Transverse colon (tissue), 4 donors: ENCODE measurements at regions of chr13 and their contacts with region 1.

Region 1: DNA sequence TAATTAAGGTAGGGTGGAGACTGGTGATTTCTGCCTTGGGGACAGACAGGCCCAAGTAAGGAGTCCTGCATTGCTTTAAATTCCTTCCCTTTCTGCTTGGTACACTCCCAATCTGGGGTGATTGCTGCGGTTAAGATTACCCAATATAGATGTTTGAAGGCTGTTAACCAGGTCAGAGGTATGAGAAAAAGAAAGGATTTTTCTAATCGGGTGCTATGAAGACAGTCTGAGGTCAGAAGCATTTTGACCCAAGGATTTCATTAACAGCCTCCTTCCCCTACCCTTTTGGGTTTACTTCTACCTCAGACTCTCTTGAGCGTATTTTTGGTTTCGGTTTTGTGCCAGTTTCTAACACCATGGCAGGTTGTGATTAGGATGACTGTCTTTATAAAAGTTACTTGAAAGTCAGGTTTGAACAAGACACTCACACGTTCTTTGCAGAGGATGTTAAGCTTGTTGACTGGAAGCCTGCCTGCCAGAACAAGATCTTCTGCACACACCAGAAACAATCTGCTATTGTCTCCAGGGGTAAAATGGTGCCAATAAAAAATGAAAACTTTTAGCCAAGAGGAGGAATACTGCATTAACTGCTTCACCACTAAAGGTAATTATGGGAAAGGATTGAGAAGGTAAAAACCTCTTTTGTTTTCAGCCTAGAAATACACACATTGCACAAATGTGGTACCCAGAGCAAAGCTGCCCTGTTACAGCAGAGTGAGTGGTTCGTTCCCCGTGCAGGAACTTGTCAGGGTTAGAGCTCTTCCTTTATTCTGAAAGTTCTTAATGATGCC is 108.8 kb downstream of the NDFIP2 start:
- DNase-seq: no peak
- H3K4me3 ChIP-seq: peak overlapping the region in 1 of 4 donors; percentile 9
- H3K27ac ChIP-seq: no peak overlapping the region
- H3K4me1 ChIP-seq: peaks cover 0 to 5% (median 0%) of the 10 kb centered on the region in 4 donors
- H3K27me3 ChIP-seq: no peaks in the 10 kb centered on the region
- CTCF ChIP-seq: no peak
- EP300 ChIP-seq: no peak
- POLR2A ChIP-seq: no peak

Region 2: GRCh38 chr13:78777976-78778375 is 811.8 kb before region 1 on chr13:
- in situ Hi-C with region 1: no loop called
- intact Hi-C with region 1: no loop called
- DNase-seq: no peak
- H3K4me3 ChIP-seq: no peak overlapping the region
- H3K27ac ChIP-seq: no peak overlapping the region
- H3K4me1 ChIP-seq: no peaks in the 10 kb centered on the region
- H3K27me3 ChIP-seq: no peaks in the 10 kb centered on the region
- CTCF ChIP-seq: no peak
- EP300 ChIP-seq: no peak
- POLR2A ChIP-seq: no peak

Region 3: GRCh38 chr13:79533781-79534400 is 55.9 kb before region 1 on chr13:
- in situ Hi-C with region 1: no loop called
- intact Hi-C with region 1: no loop called
- DNase-seq: no peak
- H3K4me3 ChIP-seq: no peak overlapping the region
- H3K27ac ChIP-seq: no peak overlapping the region
- H3K4me1 ChIP-seq: no peaks in the 10 kb centered on the region
- H3K27me3 ChIP-seq: no peaks in the 10 kb centered on the region
- CTCF ChIP-seq: no peak
- EP300 ChIP-seq: no peak
- POLR2A ChIP-seq: no peak

Region 4: DNA sequence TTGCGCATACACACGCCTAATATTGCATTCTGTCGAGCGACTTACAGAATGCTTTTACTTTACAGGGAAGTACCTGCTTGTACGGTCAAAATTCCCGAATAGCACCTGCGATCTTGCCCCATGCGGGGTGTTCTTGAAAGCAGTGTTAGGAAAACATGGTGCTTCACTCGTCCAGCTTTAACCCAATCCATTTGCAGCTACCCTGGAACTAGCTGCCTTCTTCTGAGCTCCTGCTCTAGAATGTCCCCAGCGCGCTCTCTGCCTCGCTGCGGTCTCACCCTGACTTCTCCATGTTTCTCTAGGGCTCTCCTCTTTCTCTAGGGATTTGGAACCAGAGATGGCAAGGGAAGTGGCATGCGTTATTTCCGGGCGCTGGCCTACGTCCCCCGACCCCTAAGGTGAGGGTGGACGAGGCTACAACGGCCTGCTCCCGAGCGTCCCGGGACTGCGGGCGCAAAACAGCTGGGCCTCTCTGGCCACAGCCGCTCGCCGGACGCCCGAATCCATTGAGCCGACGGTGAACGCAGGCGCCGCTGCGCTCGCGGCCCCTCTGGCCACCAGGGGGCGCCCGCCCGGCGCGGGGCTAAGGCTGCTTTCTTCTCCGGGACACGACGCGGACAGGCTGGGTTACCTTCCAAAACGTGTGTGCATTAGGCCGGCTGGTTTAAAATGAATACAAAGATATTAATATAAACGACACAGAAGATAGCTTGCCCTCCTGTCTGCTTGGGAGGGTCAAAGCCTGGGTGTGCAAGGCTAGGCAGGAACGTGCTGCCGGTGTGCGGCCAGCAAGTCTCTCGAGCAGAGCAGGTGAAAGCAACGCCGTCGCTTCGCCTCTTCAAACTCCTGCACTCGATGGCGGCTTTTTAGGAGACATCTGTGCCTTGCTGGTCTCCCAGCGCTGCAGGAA is 752.9 kb after region 1 on chr13:
- in situ Hi-C with region 1: no loop called
- intact Hi-C with region 1: no loop called
- DNase-seq: peak; percentile 87
- H3K4me3 ChIP-seq: peak overlapping the region; percentile 21 to 94 (median 70)
- H3K27ac ChIP-seq: peak overlapping the region; percentile 95 to 98 (median 96)
- H3K4me1 ChIP-seq: peaks cover 0 to 10% (median 0%) of the 10 kb centered on the region in 4 donors
- H3K27me3 ChIP-seq: no peaks in the 10 kb centered on the region
- CTCF ChIP-seq: peak; percentile 90 to 99 (median 99)
- EP300 ChIP-seq: no peak
- POLR2A ChIP-seq: peak; percentile 68

Region 5: GRCh38 chr13:81591528-81592220 is 2001.9 kb after region 1 on chr13:
- in situ Hi-C with region 1: no loop called
- intact Hi-C with region 1: loop called (anchors 5 kb)
- DNase-seq: no peak
- H3K4me3 ChIP-seq: no peak overlapping the region
- H3K27ac ChIP-seq: no peak overlapping the region
- H3K4me1 ChIP-seq: peaks cover 0 to 6% (median 0%) of the 10 kb centered on the region in 4 donors
- H3K27me3 ChIP-seq: no peaks in the 10 kb centered on the region
- CTCF ChIP-seq: no peak
- EP300 ChIP-seq: no peak
- POLR2A ChIP-seq: no peak